Natural killer cell (primary cell): ENCODE measurements at regions of chr11 and their contacts with region 1.

Region 1: DNA sequence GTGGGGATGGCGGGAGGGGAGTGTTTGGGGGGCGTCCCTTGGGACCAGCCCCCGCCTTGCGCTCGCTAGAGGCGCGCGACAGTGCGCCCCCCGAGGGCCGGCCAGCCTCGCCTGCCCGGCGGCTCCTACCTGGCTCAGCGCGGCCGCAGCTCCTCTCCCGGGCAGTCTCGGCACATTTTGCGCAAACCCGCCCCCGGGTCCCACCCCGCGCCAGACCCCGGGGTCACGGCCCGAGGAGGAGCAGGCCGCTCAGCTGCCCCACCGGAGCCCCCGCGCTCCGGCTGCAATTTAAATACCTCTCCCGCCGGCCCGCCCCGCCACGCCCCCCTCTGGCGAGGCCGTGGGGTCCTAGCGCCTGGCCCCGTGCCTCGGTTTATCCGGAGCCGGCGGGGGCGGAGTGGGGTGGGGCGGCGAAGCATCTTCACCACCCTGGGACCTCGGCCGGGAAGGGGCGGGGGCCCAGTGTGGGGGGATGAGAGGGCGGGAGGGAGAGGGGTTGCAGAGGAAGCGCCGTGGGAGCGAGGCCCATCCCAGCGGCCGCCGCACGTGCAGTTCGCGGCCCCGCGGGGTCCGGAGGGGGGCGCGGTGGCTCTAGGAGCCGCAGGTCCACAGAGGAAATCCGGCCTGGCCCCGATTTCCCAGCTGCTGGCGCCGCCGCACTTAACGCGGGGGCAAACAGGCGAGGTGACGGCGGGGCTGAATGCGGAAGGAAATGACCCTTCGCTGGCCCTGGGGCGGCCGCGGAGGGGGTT is at the start of gene LRRC32:
- DNase-seq: peak; percentile 37 to 43
- ATAC-seq: peak; percentile 29 to 40 (median 39)
- H3K4me3 ChIP-seq: peak within 1 kb of the TSS; percentile 20
- H3K4me3 Mint-ChIP-seq: peak within 1 kb of the TSS; percentile 79
- H3K27ac ChIP-seq: no peak within 1 kb of the TSS
- H3K27ac Mint-ChIP-seq: peak within 1 kb of the TSS in 1 of 2 donors; percentile 87
- H3K4me1 ChIP-seq: peaks cover 46% of the 10 kb centered on the region
- H3K4me1 Mint-ChIP-seq: peaks cover 22 to 43% of the 10 kb centered on the region in 2 donors
- H3K27me3 ChIP-seq: peaks cover 7% of the 10 kb centered on the region
- H3K27me3 Mint-ChIP-seq: peaks cover 12 to 18% of the 10 kb centered on the region in 2 donors
- CTCF ChIP-seq: no peak
- total RNA-seq, gene LRRC32: 0.14 to 1.4 (median 1.4) TPM

Region 2: DNA sequence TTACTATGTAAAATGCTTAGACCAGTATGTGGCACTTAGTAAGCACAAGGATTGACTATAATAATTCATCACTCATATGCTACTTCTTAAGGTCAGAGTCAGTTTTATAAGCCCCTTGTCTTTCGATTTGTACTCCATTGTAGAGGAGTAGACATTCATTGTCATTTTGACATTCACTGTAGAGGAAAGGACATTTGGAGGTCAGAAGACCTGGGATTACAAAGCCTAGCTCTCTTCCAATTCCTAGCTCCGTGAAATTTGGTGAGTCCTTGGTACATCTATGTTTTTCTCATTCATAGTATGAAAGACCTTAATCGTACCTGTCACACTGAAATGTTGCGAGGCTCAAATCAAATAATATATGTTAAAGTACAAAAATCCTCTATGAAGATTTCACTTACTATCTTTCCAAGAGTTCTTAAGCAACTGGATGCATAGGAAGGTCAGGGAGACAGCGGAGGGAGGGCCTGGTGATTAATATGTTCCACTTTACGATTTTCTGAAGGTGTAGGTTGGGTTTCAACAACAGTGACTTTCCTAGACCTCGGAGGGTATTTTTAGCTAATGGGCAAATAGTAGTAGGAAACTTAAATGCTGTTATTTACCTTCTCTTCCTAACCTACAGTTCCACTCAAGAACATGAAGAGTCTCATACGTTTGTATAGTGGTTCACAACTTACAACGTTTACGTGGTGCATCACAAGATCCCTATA is 227.2 kb before region 1 on chr11:
- intact Hi-C with region 1: no loop called
- DNase-seq: no peak
- ATAC-seq: no peak
- H3K4me3 ChIP-seq: peak overlapping the region; percentile 84
- H3K4me3 Mint-ChIP-seq: peak overlapping the region; percentile 98
- H3K27ac ChIP-seq: peak overlapping the region; percentile 86
- H3K27ac Mint-ChIP-seq: peak overlapping the region; percentile 98 to 99
- H3K4me1 ChIP-seq: peaks cover 12% of the 10 kb centered on the region
- H3K4me1 Mint-ChIP-seq: peaks cover 25 to 41% of the 10 kb centered on the region in 2 donors
- H3K27me3 ChIP-seq: no peaks in the 10 kb centered on the region
- H3K27me3 Mint-ChIP-seq: no peaks in the 10 kb centered on the region
- CTCF ChIP-seq: no peak

Region 3: DNA sequence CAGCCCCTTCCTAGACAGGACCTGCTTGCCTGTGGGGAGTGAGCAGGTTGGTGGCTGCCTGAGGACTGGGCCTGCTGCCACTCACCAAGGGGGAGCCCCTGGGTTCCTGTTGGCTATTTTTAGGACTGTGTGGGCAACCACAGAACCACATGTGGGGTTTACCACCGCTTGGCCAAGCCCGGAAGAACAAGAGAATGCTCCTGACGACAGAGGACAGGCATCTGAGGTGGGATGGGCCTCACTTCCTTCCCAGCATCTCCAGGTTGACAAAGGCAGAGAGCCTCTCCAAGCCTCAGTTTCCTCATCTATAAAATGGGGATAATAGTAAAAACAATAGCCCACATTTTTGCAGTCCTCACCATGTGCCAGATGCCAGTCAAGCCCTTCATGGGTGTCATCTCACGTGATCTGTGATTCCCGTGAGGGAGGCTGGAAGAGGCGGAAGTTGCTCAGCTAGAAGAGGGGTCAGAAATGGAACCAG is 43.7 kb before region 1 on chr11:
- intact Hi-C with region 1: loop called (anchors 5 kb)
- DNase-seq: peak; percentile 46 to 60
- ATAC-seq: peak; percentile 61 to 92 (median 74)
- H3K4me3 ChIP-seq: no peak overlapping the region
- H3K4me3 Mint-ChIP-seq: peak overlapping the region; percentile 45
- H3K27ac ChIP-seq: no peak overlapping the region
- H3K27ac Mint-ChIP-seq: peak overlapping the region; percentile 26 to 62
- H3K4me1 ChIP-seq: peaks cover 43% of the 10 kb centered on the region
- H3K4me1 Mint-ChIP-seq: peaks cover 21 to 34% of the 10 kb centered on the region in 2 donors
- H3K27me3 ChIP-seq: peaks cover 27% of the 10 kb centered on the region
- H3K27me3 Mint-ChIP-seq: peaks cover 46 to 53% of the 10 kb centered on the region in 2 donors
- CTCF ChIP-seq: no peak